ENCODE measurements at regions of chr2 and their contacts with region 1.

Region 1: DNA sequence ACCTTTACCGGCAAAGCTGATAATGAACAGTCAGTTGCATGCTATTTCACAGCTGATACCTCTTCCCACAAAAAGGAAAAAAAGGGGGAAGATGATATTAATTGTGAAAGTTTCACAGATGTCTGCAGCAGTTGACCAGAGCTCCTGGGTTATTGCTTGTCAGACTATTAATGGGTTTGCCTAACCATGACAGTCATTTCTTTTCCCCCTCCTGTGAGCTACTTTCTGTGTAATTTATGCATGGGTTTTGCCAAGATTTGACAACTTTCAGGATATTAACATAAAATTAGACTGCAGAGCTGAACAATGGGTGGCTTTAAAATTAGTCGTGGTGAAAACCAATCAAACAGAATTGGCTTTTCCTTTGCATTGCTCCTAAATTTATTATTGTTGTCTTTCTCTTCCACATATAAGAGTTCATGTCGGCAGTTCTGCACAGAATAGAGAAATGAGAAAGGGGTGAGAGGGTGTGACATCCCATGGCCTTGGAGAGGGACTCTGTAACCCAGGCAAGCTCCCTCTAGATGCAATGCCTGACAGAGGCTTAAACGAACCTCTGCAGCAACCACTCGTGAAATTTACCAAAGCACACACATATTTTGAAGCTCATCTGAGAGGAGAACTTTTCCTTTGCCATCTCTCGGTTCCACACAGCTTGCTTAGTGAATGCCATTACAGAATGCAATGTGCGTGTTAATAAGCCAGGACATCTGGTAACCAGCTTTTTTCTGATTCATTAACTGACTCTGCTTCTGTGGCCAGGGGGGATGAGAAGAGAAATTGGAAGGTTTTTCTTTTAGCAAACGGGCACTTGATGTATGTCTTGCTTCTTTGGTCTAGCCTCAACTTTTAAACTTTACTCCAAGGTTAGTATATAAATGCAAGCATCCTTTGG is 82.2 kb upstream of the ITGA4 start:
- DNase-seq: no peak
- ATAC-seq: no peak
- H3K4me3 ChIP-seq: no peak overlapping the region
- H3K4me3 Mint-ChIP-seq: no peak overlapping the region
- H3K27ac ChIP-seq: no peak overlapping the region
- H3K27ac Mint-ChIP-seq: no peak overlapping the region
- H3K4me1 ChIP-seq: peaks cover 18% of the 10 kb centered on the region
- H3K4me1 Mint-ChIP-seq: peaks cover 28% of the 10 kb centered on the region
- H3K27me3 ChIP-seq: no peaks in the 10 kb centered on the region
- H3K27me3 Mint-ChIP-seq: no peaks in the 10 kb centered on the region
- CTCF ChIP-seq: no peak

Region 2: GRCh38 chr2:181046833-181047232 is 328.2 kb before region 1 on chr2:
- CTCF ChIA-PET with region 1: no interaction called
- POLR2A ChIA-PET with region 1: no interaction called
- intact Hi-C with region 1: no loop called
- DNase-seq: no peak
- ATAC-seq: peak; percentile 40
- H3K4me3 ChIP-seq: no peak overlapping the region
- H3K4me3 Mint-ChIP-seq: no peak overlapping the region
- H3K27ac ChIP-seq: no peak overlapping the region
- H3K27ac Mint-ChIP-seq: no peak overlapping the region
- H3K4me1 ChIP-seq: no peaks in the 10 kb centered on the region
- H3K4me1 Mint-ChIP-seq: peaks cover 12% of the 10 kb centered on the region
- H3K27me3 ChIP-seq: no peaks in the 10 kb centered on the region
- H3K27me3 Mint-ChIP-seq: no peaks in the 10 kb centered on the region
- CTCF ChIP-seq: no peak

Region 3: DNA sequence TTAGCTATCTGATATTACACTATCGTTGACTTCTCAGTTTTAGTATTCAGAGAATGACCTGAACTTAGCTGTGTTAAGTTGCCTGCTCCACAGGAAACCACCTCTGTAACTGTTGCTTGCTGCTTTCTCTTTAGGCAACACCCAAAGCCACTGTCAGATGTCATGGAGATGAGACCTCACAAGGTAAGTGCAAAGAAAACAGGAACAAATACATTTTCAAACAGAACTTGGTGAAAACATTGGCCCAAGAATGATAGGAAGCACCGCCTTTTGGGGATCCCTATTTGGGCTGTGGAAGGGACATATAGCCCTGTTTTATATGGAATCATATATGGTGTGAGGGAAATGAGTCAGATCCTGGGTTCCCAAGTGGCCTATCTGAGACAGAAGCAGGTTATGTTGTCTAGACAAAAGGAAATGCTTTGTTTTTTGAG is 251.2 kb before region 1 on chr2:
- CTCF ChIA-PET with region 1: no interaction called
- POLR2A ChIA-PET with region 1: no interaction called
- intact Hi-C with region 1: no loop called
- DNase-seq: peak; percentile 25 to 94 (median 60)
- ATAC-seq: peak; percentile 93
- H3K4me3 ChIP-seq: peak overlapping the region; percentile 31 to 42
- H3K4me3 Mint-ChIP-seq: peak overlapping the region; percentile 81
- H3K27ac ChIP-seq: peak overlapping the region; percentile 84 to 96
- H3K27ac Mint-ChIP-seq: peak overlapping the region; percentile 99
- H3K4me1 ChIP-seq: peaks cover 66% of the 10 kb centered on the region
- H3K4me1 Mint-ChIP-seq: peaks cover 74% of the 10 kb centered on the region
- H3K27me3 ChIP-seq: no peaks in the 10 kb centered on the region
- H3K27me3 Mint-ChIP-seq: no peaks in the 10 kb centered on the region
- CTCF ChIP-seq: no peak

Region 4: GRCh38 chr2:181420259-181421130 is 45.5 kb after region 1 on chr2:
- CTCF ChIA-PET with region 1: no interaction called
- POLR2A ChIA-PET with region 1: no interaction called
- intact Hi-C with region 1: loop called in 1 of 2 experiments (anchors 5 kb)
- DNase-seq: no peak
- ATAC-seq: no peak
- H3K4me3 ChIP-seq: no peak overlapping the region
- H3K4me3 Mint-ChIP-seq: peak overlapping the region; percentile 16
- H3K27ac ChIP-seq: no peak overlapping the region
- H3K27ac Mint-ChIP-seq: peak overlapping the region; percentile 53
- H3K4me1 ChIP-seq: no peaks in the 10 kb centered on the region
- H3K4me1 Mint-ChIP-seq: peaks cover 19% of the 10 kb centered on the region
- H3K27me3 ChIP-seq: no peaks in the 10 kb centered on the region
- H3K27me3 Mint-ChIP-seq: no peaks in the 10 kb centered on the region
- CTCF ChIP-seq: no peak

Region 5: GRCh38 chr2:183348492-183348891 is 1973.5 kb after region 1 on chr2:
- CTCF ChIA-PET with region 1: no interaction called
- POLR2A ChIA-PET with region 1: no interaction called
- intact Hi-C with region 1: no loop called
- DNase-seq: no peak
- ATAC-seq: no peak
- H3K4me3 ChIP-seq: no peak overlapping the region
- H3K4me3 Mint-ChIP-seq: no peak overlapping the region
- H3K27ac ChIP-seq: no peak overlapping the region
- H3K27ac Mint-ChIP-seq: no peak overlapping the region
- H3K4me1 ChIP-seq: no peaks in the 10 kb centered on the region
- H3K4me1 Mint-ChIP-seq: no peaks in the 10 kb centered on the region
- H3K27me3 ChIP-seq: no peaks in the 10 kb centered on the region
- H3K27me3 Mint-ChIP-seq: no peaks in the 10 kb centered on the region
- CTCF ChIP-seq: no peak

Measured in CD8-positive, alpha-beta T cell (primary cell).